Activated naive CD4-positive, alpha-beta T cell treated with anti-CD3 and anti-CD28 coated beads for 36 hours (primary cell): ENCODE measurements at regions of chr2 and their contacts with region 1.

Region 1: DNA sequence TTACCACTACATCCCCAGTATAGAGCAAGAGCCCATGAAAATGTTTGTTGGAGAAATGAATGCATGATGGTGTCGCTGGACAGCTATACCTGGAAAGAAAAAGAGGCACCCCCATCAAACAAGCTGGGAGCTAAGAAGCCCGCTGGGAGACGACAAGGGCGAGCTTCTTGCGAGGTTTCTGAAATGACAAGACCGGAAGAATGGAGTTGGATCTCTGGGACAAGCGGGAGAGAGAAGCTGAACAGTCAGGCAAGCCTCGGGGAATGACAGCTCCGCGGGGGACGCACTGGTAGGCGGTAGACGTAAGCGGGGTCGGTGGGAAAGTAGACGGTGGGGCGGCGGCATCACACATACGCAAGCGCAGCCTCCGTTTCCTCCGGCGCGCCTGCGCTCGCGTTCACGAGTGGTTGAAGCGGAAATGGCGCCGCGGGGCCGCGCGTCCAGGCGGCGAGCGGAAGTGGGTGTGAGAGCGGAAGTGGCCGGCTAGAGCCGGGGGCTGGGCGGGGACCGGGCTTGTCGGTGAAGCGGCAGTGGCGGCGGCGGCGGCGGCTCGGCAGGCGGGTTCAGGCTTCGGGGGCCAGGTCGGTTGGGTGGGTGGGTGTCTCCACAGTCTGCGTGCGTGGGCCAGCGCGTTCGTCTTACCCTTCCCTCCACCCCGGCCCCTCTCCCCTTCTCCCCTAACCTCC is at the start of gene ARPC2:
- DNase-seq: peak; percentile 95
- H3K4me3 Mint-ChIP-seq: peak within 1 kb of the TSS; percentile 78
- H3K27ac Mint-ChIP-seq: peak within 1 kb of the TSS; percentile 88
- H3K4me1 Mint-ChIP-seq: peaks cover 29% of the 10 kb centered on the region
- H3K27me3 Mint-ChIP-seq: no peaks in the 10 kb centered on the region
- total RNA-seq, gene ARPC2: 461 to 475 TPM

Region 2: GRCh38 chr2:217943446-217944389 is 273.1 kb before region 1 on chr2:
- CTCF ChIA-PET with region 1: no interaction called
- intact Hi-C with region 1: no loop called
- DNase-seq: no peak
- H3K4me3 Mint-ChIP-seq: no peak overlapping the region
- H3K27ac Mint-ChIP-seq: no peak overlapping the region
- H3K4me1 Mint-ChIP-seq: peaks cover 2% of the 10 kb centered on the region
- H3K27me3 Mint-ChIP-seq: peaks cover 20% of the 10 kb centered on the region

Region 3: GRCh38 chr2:218186355-218186766 is 30.5 kb before region 1 on chr2:
- CTCF ChIA-PET with region 1: interaction called, 4 read pairs
- intact Hi-C with region 1: loop called (anchors 1 kb)
- DNase-seq: peak; percentile 87
- H3K4me3 Mint-ChIP-seq: no peak overlapping the region
- H3K27ac Mint-ChIP-seq: no peak overlapping the region
- H3K4me1 Mint-ChIP-seq: peaks cover 7% of the 10 kb centered on the region
- H3K27me3 Mint-ChIP-seq: no peaks in the 10 kb centered on the region

Region 4: DNA sequence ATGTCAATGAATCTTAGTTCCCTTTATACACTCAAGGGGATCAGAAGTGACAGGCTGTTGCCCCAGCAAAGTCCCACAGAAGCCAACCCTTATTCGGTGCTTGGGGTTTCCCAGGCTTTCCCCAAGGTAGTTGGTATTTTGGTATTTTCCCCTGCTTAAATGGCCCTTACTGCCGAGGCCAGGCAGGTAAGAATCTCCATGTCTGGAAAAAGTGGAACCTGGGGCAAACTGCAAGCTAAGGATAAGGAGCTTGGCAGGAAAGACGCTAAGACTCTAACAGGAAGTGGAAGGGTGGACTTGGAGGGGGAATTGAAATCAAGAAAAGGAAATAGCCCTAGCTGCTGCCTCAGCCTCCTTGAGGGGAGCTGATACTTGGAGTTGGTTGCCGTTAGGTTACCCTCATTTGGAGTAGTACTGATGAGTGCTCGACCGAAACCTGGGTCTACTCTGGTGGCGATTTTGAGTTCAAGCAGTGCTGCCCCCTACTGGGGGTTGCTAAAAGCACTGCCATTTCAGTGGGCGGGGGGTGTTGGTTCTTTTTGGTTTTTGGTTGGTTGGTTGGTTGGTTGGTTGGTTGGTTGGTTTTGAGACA is 40.7 kb after region 1 on chr2:
- CTCF ChIA-PET with region 1: interaction called, 6 read pairs
- intact Hi-C with region 1: loop called (anchors 1 kb)
- DNase-seq: peak; percentile 79
- H3K4me3 Mint-ChIP-seq: no peak overlapping the region
- H3K27ac Mint-ChIP-seq: peak overlapping the region; percentile 87
- H3K4me1 Mint-ChIP-seq: peaks cover 18% of the 10 kb centered on the region
- H3K27me3 Mint-ChIP-seq: no peaks in the 10 kb centered on the region

Region 5: DNA sequence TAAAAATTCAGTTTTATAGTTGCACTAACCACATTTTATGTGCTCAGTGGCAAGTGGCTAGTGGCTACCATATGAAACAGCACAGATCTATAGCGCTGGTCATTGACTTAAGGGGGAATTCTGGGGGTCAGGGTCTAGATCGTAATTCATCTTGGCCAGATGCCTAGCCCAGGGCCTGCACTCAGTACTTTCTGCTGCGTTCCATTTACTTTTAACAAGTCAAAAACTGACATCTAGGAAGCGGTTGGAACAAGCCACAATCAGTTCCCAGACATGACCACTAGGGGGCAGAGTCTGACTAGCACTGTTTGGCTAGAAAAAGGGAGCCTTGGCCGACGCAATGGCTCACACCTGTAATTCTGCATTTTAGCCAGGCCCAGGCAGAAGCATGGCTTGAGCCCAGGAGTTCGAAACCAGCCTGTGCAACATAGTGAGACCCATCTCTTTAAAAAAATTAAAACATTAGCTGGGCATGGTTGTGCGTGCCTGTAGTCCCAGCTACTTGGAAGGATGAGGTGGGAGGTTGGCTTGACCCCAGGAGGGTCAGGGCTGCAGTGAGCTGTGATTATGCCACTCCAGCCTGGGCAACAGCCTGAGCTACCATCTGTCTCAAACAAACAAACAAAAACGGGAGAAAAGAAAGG is 84.5 kb after region 1 on chr2:
- CTCF ChIA-PET with region 1: no interaction called
- intact Hi-C with region 1: no loop called
- DNase-seq: peak; percentile 97
- H3K4me3 Mint-ChIP-seq: no peak overlapping the region
- H3K27ac Mint-ChIP-seq: no peak overlapping the region
- H3K4me1 Mint-ChIP-seq: peaks cover 5% of the 10 kb centered on the region
- H3K27me3 Mint-ChIP-seq: no peaks in the 10 kb centered on the region

Region 6: DNA sequence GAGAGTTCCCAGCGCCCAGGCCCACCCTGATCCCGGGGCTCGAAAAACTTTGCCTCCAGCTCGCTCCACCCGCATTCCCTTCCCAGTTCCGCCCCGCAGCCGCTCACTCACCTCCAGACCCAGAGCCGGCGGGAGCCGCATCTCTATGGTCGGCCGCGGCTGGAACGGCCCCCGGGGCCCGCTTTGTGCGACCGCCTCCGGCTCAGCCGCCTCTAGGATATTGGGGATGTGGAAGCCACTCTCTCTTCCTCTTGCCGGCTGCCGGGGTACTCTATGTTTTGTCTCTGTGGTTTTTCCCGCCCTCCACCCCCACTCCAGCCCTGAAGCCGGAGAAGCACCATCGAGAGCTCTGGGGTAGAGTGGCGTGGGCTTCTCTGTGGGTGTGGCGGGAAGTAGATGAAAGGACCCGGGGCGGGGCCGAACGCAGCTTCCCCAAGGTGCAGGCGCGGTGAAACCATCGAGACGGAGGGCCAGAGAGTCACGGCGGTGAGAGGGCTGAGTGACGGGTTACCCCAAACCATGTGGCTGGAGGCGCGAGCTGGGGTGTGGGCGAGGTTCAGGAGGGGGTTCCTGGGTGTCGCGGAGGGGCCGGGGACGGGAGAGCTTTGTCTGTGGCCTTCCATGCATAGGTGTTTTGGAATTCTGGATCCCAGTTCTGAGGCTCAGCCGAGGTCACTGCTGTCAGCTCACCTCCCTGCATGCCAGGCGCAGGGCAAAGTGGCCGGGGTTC is 442.6 kb after region 1 on chr2 and contains the starts of genes BCS1L and ZNF142:
- CTCF ChIA-PET with region 1: no interaction called
- intact Hi-C with region 1: loop called (anchors 5 kb)
- DNase-seq: peak; percentile 98
- H3K4me3 Mint-ChIP-seq: peak within 1 kb of the TSS; percentile 90
- H3K27ac Mint-ChIP-seq: peak within 1 kb of the TSS; percentile 81
- H3K4me1 Mint-ChIP-seq: peaks cover 40% of the 10 kb centered on the region
- H3K27me3 Mint-ChIP-seq: no peaks in the 10 kb centered on the region
- total RNA-seq, gene BCS1L: 61.3 to 63.6 TPM
- total RNA-seq, gene ZNF142: 28.0 to 28.4 TPM

Region 7: DNA sequence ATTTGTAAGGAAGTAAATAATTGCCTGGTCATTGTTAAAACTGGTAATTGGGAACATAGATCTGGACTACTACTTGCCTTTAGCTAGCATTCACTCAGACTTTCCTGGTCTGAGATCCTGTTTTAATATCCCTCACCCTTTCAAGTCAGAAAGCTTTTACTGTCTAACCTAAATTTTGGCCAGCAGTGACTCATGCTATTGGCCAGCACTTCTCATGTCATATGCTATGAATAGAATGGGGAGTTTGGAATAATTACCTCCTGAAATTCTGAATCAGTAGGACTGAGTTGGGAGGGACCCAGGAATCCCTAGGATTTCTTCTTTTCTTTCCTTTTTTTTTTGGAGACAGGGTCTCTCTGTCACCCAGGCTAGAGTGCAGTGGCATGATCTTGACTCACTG is 474.4 kb after region 1 on chr2:
- CTCF ChIA-PET with region 1: no interaction called
- intact Hi-C with region 1: no loop called
- DNase-seq: no peak
- H3K4me3 Mint-ChIP-seq: no peak overlapping the region
- H3K27ac Mint-ChIP-seq: no peak overlapping the region
- H3K4me1 Mint-ChIP-seq: peaks cover 2% of the 10 kb centered on the region
- H3K27me3 Mint-ChIP-seq: no peaks in the 10 kb centered on the region